SK-N-SH (cell line): ENCODE measurements at regions of chr7 and their contacts with region 1.

Region 1: GRCh38 chr7:128835790-128836641 is 5.8 kb downstream of the FLNC start:
- DNase-seq: no peak
- H3K4me3 ChIP-seq: no peak overlapping the region
- H3K27ac ChIP-seq: peak overlapping the region in 1 of 2 experiments; percentile 47; a peak in 1 of 4 replicates
- H3K4me1 ChIP-seq: peaks cover 19 to 25% of the 10 kb centered on the region in 2 experiments; a peak in 3 of 4 replicates
- H3K27me3 ChIP-seq: no peaks in the 10 kb centered on the region
- CTCF ChIP-seq: no peak
- EP300 ChIP-seq: no peak
- RAD21 ChIP-seq: no peak

Region 2: GRCh38 chr7:128221929-128222403 is 614.0 kb before region 1 on chr7:
- CTCF ChIA-PET with region 1: no interaction called
- POLR2A ChIA-PET with region 1: no interaction called
- DNase-seq: peak; percentile 69
- H3K4me3 ChIP-seq: no peak overlapping the region
- H3K27ac ChIP-seq: peak overlapping the region in 1 of 2 experiments; percentile 35; a peak in 2 of 4 replicates
- H3K4me1 ChIP-seq: peaks cover 3 to 19% of the 10 kb centered on the region in 2 experiments; a peak in 2 of 4 replicates
- H3K27me3 ChIP-seq: no peaks in the 10 kb centered on the region
- CTCF ChIP-seq: no peak
- EP300 ChIP-seq: peak; percentile 41 to 72; a peak in 2 of 4 replicates
- RAD21 ChIP-seq: no peak

Region 3: GRCh38 chr7:128763541-128763940 is 72.5 kb before region 1 on chr7:
- CTCF ChIA-PET with region 1: no interaction called
- POLR2A ChIA-PET with region 1: no interaction called
- DNase-seq: no peak
- H3K4me3 ChIP-seq: no peak overlapping the region
- H3K27ac ChIP-seq: no peak overlapping the region
- H3K4me1 ChIP-seq: 0 out of 4 replicates have a peak, but pooled peaks cover 0 to 7% of the 10 kb centered on the region in 2 experiments
- H3K27me3 ChIP-seq: no peaks in the 10 kb centered on the region
- CTCF ChIP-seq: no peak
- EP300 ChIP-seq: no peak
- RAD21 ChIP-seq: no peak

Region 4: DNA sequence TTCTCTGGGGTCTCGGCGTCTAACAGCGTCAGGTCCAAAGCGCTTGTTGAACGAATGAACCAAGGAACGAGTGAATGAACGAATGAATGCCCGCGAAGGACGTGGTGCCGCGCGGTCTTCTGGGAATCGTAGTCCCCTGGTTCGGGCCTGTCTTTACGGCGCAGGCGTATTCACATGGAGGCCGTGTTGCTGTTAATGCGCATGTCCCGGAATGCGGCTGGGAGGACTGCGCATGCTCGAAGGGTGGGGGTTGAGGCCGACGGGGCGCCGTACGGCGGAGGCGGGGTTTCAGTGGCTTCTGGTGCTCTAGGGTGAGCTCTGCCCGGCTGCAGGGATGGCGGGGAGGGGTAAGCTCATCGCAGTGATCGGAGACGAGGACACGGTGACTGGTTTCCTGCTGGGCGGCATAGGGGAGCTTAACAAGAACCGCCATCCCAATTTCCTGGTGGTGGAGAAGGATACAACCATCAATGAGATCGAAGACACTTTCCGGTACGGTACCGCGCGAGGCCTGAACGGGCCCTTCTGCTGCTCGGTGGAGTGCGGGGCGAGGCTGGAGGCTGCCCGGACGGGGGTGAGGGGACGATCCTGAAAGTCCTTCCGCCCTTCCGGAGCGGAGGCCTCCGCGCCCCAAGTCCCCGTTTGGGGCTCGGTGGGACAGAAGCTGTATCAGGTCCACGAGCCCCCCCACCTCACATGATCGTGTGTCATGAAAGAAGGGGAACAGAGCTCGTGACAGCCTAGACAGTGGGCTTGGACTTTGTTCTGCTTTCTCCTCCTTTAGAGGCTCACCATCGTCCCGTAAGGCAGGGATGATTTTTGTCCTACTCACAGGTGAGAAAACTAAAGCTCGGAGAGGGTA is 26.8 kb after region 1 on chr7 and contains the start of gene ATP6V1F:
- CTCF ChIA-PET with region 1: interaction called, 10 read pairs
- POLR2A ChIA-PET with region 1: interaction called, 3 read pairs
- DNase-seq: peak; percentile 100
- H3K4me3 ChIP-seq: peak within 1 kb of the TSS; percentile 89 to 95
- H3K27ac ChIP-seq: peak within 1 kb of the TSS; percentile 60 to 72
- H3K4me1 ChIP-seq: peaks cover 0 to 18% of the 10 kb centered on the region in 2 experiments; a peak in 1 of 4 replicates
- H3K27me3 ChIP-seq: no peaks in the 10 kb centered on the region
- CTCF ChIP-seq: no peak
- EP300 ChIP-seq: no peak
- RAD21 ChIP-seq: no peak
- polyA plus RNA-seq, gene ATP6V1F: 437 and 495 TPM in 2 replicates